Spleen (tissue), 13 donors: ENCODE measurements at regions of chr6 and their contacts with region 1.

Region 1: DNA sequence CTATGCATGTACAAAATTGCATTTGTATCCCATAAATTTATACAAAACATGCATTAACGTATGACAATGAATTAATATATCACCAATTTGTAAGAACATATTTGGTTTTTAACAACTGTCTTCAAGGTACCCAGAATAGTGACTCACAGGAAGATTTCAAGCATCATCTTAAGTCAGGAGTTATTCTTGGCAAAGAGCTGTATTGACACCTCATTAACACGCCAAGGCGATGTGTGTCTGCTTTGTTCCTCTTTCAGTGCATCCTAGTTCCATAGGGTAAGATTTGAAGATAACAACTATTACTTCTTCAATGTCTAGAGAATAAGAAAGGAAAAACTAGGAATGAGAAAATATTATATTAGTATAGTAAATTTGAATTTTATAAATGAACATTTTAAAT is 35.8 kb upstream of the TPD52L1 start:
- DNase-seq: no peak
- H3K4me3 ChIP-seq: no peak overlapping the region
- H3K27ac ChIP-seq: no peak overlapping the region
- H3K4me1 ChIP-seq: no peaks in the 10 kb centered on the region
- H3K27me3 ChIP-seq: no peaks in the 10 kb centered on the region
- CTCF ChIP-seq: no peak
- POLR2A ChIP-seq: no peak

Region 2: DNA sequence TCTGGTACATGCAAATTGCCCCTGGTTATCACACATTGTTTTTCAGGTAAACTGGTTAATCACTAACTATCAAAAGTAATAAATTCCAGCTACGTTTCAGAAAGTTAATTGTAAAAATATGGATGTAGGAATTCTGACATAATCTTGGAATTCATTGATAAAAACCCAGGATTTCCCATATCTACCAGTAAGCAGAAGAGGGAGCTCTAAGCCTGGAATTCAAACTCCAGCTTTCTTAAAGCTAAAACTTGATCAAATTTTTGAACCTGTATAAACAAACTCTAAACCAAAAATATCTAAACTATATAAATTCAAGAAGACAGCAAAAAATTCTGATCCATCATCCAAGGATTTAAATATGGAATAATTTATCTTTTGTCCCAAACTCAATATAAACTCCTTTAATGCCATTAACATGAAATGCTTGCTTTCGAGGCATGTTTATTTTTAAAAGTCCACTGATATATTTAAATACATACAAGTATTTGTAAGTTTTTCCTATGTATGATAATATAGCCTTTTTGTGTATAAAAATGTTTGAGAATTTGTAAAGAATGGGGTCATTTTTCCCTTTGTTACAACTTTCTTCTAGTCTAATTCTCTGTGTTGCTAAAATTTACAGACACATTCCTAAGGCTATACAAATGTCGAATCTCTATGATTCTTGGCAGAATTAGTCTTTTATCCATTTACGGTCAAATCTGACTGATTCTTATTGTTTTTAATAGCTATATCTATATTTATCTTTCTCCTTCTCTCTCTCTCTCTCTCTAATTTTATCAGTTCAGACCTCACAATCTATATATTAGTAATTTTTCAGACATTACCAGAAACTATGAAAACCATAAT is 247.0 kb before region 1 on chr6:
- intact Hi-C with region 1: loop called (anchors 5 kb)
- DNase-seq: no peak
- H3K4me3 ChIP-seq: no peak overlapping the region
- H3K27ac ChIP-seq: no peak overlapping the region
- H3K4me1 ChIP-seq: no peaks in the 10 kb centered on the region
- H3K27me3 ChIP-seq: no peaks in the 10 kb centered on the region
- CTCF ChIP-seq: peak in 10 of 11 experiments; percentile 13 to 59 (median 48)
- POLR2A ChIP-seq: no peak

Region 3: DNA sequence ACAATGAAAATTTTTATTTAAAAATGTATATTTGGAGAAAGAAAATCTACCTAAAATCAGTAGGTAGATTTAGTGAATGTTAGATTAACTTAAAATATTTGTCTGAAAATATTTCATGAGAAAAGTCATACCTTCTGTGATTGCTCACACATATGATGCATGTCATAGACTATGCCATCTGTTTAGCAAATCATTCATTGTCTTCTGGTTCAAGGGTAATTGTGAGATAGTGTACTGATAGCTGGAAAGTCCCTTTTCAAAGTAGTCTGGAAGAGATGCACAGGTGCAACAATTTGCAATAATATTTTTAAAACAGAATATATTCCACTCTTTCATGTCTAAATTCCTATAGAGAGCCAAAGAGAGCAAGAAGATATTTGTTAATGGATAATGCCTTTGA is 176.6 kb before region 1 on chr6:
- intact Hi-C with region 1: no loop called
- DNase-seq: no peak
- H3K4me3 ChIP-seq: no peak overlapping the region
- H3K27ac ChIP-seq: no peak overlapping the region
- H3K4me1 ChIP-seq: no peaks in the 10 kb centered on the region
- H3K27me3 ChIP-seq: no peaks in the 10 kb centered on the region
- CTCF ChIP-seq: no peak
- POLR2A ChIP-seq: no peak

Region 4: GRCh38 chr6:125170376-125170775 is 52.6 kb after region 1 on chr6:
- intact Hi-C with region 1: no loop called
- DNase-seq: no peak
- H3K4me3 ChIP-seq: no peak overlapping the region
- H3K27ac ChIP-seq: no peak overlapping the region
- H3K4me1 ChIP-seq: no peaks in the 10 kb centered on the region
- H3K27me3 ChIP-seq: no peaks in the 10 kb centered on the region
- CTCF ChIP-seq: no peak
- POLR2A ChIP-seq: no peak